ENCODE measurements at regions of chr22 and their contacts with region 1.

Region 1: DNA sequence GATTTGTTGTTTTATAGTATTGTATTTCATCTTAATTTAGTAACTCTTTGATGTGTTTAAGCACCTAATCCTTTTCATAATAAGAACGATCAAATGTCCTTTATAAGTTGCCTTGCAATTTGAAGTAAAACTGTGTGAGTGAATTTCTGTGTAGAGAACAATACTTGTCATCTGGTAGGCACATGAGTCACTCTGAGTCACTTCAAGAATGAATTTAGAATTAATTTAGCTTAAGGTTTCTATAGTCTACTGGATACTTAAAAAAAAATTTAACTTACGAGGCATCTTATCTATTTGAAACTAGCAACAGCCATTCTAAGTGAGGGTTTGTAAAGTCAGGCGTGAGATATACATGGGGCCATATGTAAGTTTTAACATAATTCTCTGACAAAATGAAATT is 85.0 kb downstream of the C22orf31 start:
- DNase-seq: no peak

Region 2: GRCh38 chr22:28935713-28936112 is 40.9 kb before region 1 on chr22:
- intact Hi-C with region 1: no loop called
- DNase-seq: no peak

Region 3: DNA sequence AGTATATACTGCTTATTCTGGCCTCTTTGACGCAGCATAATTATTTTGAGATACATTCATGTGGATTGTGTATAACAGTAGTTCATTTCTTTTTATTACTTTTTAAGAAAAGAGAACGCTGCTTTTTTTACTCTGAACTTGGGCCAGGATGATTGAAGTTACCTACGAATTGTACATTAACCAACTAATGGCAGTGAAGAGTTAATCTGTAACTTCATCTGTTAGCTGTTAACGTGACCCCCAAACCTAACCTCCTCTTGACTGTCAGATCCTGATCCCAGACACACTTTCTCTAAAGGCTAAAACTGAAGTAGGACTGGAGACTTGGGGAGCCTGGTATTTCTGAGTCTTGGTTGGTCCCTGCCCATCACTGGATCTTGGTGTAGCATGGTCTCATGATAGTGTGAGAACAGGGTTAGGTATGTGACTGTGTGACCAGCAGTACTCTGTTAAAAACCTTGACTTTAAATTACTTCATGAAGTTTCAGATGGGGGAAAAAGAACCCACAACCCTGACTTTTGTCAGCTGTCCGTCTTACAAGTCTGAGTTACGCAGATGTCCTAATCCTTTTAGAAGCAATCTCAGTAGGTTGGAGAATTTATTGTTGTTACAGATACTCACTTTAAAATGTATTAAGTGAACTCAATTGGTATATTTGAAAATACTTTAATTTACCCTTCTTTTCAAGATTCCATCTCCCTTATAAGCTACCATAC is 45.7 kb after region 1 on chr22:
- intact Hi-C with region 1: loop called (anchors 1 to 10 kb)
- DNase-seq: no peak

Region 4: DNA sequence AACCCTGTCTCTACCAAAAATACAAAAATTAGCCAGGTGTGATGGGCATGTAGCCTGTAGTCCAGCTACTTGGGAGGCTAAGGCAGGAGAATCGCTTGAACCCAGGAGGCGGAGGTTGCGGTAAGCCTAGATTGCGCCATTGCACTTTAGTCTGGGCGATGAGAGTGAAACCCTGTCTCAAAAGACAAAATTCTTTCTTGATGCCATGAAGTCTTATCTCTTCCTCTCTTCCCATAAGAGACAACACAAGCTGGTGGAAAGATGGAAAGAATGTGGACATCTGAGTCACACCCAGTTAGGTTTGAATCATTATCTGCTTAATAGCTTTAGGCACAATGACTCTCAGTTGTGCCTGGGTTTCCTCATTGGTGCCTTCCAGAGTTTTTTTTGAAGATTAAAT is 131.5 kb after region 1 on chr22:
- intact Hi-C with region 1: no loop called
- DNase-seq: no peak

Measured in posterior vena cava (tissue), 2 donors.